SK-N-SH (cell line): ENCODE measurements at regions of chr20 and their contacts with region 1.

Region 1: DNA sequence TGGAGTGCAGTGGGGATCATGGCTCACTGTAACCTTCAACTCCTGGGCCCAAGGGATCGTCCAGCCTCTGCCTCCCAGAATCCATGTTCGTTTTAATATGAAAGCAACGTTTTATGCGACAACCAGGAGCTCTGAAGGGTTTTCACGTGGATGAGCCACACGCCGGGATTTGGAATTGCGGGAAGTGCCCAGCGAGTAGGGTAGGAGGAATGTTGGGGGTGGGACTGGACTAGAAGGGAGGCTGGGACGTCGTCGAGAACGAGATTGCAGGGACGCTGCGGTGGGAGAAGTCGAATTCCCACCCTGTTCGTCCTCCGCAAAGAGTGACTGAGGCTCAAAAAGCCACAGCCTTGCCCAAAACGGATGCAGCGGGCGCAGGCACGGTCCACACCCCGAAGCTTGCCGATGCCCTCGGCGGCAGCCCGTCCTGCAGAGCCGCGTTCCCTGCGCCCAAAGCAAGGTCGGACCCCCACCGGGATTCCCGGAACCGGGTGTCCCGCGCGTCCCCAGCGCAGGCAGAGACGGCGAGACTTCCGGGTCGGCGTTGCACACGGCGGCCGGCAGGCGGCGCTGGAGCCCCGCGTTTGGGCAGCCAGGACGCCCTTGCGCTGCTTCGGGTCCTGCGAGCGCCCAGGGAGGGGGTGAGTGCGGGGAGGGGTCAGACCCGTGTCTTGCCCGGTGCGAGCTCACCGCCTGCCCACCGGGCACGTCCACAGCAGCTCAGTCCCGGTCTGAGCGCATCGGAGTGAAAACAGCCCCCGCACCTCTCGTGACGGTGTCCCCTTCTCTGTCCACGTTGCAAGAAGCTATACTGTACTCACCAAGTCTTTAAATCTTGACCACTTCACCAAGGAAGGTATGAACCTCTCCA is 87.8 kb downstream of the DHX35 start:
- DNase-seq: peak; percentile 92
- H3K4me3 ChIP-seq: peak overlapping the region; percentile 60 to 70
- H3K27ac ChIP-seq: peak overlapping the region in 1 of 2 experiments; percentile 53; a peak in 1 of 4 replicates
- H3K4me1 ChIP-seq: peaks cover 0 to 4% of the 10 kb centered on the region in 2 experiments; a peak in 1 of 4 replicates
- H3K27me3 ChIP-seq: no peaks in the 10 kb centered on the region; the same call in 1 of the 2 replicates
- CTCF ChIP-seq: peak; percentile 87
- EP300 ChIP-seq: no peak
- RAD21 ChIP-seq: peak; percentile 84

Region 2: GRCh38 chr20:38920851-38921250 is 129.1 kb before region 1 on chr20:
- CTCF ChIA-PET with region 1: interaction called, 41 read pairs
- POLR2A ChIA-PET with region 1: no interaction called
- DNase-seq: no peak
- H3K4me3 ChIP-seq: no peak overlapping the region
- H3K27ac ChIP-seq: no peak overlapping the region
- H3K4me1 ChIP-seq: no peaks in the 10 kb centered on the region; a peak in 1 of 4 replicates
- H3K27me3 ChIP-seq: peaks cover 11% of the 10 kb centered on the region; the same call in 1 of the 2 replicates
- CTCF ChIP-seq: no peak
- EP300 ChIP-seq: no peak
- RAD21 ChIP-seq: no peak

Region 3: DNA sequence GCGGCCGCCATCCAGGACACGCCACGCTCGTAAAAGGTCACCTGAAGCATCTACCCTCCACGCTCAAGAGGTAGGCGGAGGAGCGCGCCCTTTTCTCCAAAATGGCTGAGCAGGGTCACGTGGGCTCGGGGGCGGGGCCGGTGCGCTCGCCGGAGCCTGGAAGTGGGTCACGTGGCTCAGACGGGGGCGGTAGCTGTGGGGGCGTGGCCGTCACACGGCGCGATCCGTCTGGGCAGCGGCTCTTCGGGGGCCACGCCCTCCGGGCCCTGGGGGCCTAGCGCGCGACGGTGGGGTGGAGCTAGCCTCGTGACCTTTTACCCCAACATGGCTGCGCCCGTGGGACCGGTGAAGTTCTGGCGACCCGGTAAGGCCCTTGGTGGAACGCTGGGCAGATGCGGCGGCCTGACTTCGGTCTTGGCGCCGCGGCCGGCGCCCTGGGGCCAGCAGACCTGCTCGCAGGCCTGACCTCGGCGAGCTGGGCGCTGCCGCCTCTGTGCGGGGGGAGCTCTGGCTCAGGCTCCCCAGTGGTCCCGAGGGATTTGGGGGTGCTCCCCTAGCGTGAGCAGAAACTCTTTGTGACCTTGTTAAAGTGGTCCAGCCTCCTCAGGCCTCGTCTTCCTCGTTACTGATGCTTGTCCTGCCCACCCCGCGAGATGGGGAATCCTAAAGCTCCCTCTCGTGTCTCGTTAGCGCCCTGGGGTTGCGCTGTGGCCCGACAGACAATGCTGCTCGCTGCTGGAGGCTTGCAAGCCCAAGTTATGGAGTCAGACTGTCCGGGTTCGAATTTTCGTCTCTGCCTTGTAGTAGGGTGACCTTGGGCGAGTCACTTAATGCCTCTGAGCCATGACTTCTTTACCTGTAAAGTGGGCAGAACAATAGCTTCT is 87.6 kb before region 1 on chr20 and contains the start of gene DHX35:
- CTCF ChIA-PET with region 1: interaction called, 17 read pairs
- POLR2A ChIA-PET with region 1: no interaction called
- DNase-seq: peak; percentile 100
- H3K4me3 ChIP-seq: peak within 1 kb of the TSS; percentile 93 to 100
- H3K27ac ChIP-seq: peak within 1 kb of the TSS; percentile 89 to 93
- H3K4me1 ChIP-seq: peaks cover 7 to 9% of the 10 kb centered on the region in 2 experiments; a peak in 3 of 4 replicates
- H3K27me3 ChIP-seq: no peaks in the 10 kb centered on the region
- CTCF ChIP-seq: peak; percentile 42; the same call in 1 of the 2 replicates
- EP300 ChIP-seq: no peak
- RAD21 ChIP-seq: peak; percentile 56
- polyA plus RNA-seq, gene DHX35: 17.1 and 28.5 TPM in 2 replicates

Region 4: DNA sequence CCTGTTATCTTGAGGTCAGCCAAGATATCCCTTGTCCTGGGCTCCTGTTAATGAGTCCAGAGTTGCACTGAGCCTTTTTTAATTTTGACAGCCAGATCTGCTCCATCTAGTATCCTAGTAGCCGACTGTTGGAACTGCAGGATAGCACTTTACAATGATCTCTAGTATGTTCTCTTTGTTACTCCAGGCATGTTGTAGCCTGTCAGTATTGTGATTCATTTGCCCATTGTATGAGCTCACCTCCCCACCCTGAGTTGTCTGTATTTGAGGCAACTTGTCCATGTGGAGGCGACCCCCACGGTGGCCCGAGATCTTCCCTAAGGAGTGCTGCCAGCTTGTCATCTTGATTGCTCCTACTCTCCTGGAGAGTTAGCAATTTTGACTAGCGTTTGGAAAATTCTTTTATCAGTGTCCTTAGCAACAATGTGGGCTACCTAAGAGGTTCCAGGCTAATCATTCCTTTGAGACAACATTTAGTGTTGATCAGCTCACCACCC is 20.5 kb before region 1 on chr20:
- CTCF ChIA-PET with region 1: interaction called, 10 read pairs
- POLR2A ChIA-PET with region 1: interaction called, 3 read pairs
- DNase-seq: no peak
- H3K4me3 ChIP-seq: no peak overlapping the region
- H3K27ac ChIP-seq: no peak overlapping the region
- H3K4me1 ChIP-seq: no peaks in the 10 kb centered on the region
- H3K27me3 ChIP-seq: no peaks in the 10 kb centered on the region
- CTCF ChIP-seq: no peak
- EP300 ChIP-seq: no peak
- RAD21 ChIP-seq: no peak

Region 5: DNA sequence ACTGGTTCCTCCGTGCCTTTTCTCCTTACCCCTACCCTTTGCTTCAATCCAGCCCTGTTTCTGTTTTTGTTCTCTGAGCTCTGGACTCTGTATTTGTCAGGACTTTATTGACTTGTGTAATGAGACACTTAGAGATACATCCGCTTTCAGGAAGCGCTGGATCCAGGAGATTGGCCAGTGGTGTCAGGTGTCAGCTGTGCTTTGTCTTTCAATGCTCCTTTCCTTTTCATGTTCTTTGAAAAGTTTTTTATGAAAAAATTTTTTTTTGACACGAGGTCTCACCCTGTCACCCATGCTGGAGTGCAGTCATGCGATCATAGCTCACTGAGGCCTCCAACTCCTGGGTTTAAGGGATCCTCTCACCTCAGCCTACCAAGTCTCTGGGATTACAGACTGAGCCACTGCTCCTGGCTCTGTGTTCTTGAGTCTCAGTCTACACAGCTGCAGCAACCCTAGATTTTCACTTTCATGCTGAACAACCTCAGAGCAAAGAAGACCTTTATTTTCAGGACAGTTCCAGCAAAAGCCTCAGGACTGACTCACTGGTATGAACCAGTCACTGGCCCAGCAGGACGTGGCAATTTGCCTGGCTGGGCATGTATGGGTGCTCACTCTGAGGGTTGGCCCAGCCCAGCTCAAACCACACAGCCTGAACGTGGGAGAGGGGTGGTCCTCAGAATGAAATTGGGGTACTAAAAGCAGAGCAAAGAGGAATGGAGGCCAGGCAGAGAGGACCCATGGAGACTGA is 20.7 kb after region 1 on chr20:
- CTCF ChIA-PET with region 1: interaction called, 444 read pairs
- POLR2A ChIA-PET with region 1: interaction called, 5 read pairs
- DNase-seq: no peak
- H3K4me3 ChIP-seq: no peak overlapping the region
- H3K27ac ChIP-seq: no peak overlapping the region
- H3K4me1 ChIP-seq: no peaks in the 10 kb centered on the region; a peak in 2 of 4 replicates
- H3K27me3 ChIP-seq: no peaks in the 10 kb centered on the region; the same call in 1 of the 2 replicates
- CTCF ChIP-seq: no peak
- EP300 ChIP-seq: no peak
- RAD21 ChIP-seq: no peak